Activated CD4-positive, alpha-beta T cell treated with anti-CD3 and anti-CD28 coated beads for 36 hours (primary cell): ENCODE measurements at regions of chr4 and their contacts with region 1.

Region 1: GRCh38 chr4:149264093-149264733 is 551.4 kb downstream of the IQCM start:
- DNase-seq: peak; percentile 24
- ATAC-seq: no peak
- H3K4me3 Mint-ChIP-seq: no peak overlapping the region
- H3K27ac Mint-ChIP-seq: no peak overlapping the region
- H3K4me1 Mint-ChIP-seq: no peaks in the 10 kb centered on the region
- H3K27me3 Mint-ChIP-seq: no peaks in the 10 kb centered on the region

Region 2: DNA sequence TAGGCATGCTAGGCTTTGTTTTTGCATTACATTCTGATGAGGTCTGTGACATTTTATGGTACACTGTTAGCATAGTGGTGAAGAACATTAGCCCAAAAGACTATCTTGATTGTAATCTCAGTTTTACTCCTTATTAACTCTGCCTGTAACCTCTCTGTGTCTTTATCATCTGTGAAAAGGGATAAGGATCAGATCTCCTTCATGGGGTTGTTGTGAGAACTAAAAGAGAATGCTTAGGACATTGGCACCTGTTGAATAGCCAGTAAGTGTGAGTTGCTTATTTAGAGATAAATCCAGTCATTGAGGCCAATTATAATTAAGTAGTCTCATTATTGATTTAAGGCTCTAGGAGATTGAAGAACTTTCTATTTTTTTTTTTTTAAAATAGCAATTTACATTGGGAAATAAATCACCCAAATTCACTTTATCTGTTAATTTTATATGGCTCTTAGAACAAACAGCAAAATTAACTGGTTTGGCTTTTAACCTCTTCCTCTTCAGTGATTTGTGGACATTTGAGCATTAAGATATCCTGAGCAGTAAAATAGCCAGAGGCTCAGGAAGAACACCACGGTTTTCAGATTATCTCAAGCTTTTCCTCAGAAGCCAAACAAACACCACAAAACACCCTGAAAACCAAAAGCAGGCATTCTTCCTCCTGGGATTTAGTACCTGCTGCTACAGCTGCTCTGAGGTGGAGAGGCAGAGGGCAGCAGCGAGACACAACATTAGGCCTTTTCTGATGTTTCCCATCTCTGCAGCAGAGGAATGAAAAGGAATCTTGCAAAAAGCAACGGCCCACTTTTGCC is 1339.4 kb before region 1 on chr4:
- CTCF ChIA-PET with region 1: no interaction called
- POLR2A ChIA-PET with region 1: no interaction called
- intact Hi-C with region 1: loop called in 1 of 2 experiments (anchors 5 kb)
- DNase-seq: peak; percentile 26
- ATAC-seq: no peak
- H3K4me3 Mint-ChIP-seq: no peak overlapping the region
- H3K27ac Mint-ChIP-seq: no peak overlapping the region
- H3K4me1 Mint-ChIP-seq: no peaks in the 10 kb centered on the region
- H3K27me3 Mint-ChIP-seq: no peaks in the 10 kb centered on the region

Region 3: GRCh38 chr4:147984065-147984777 is 1280.0 kb before region 1 on chr4:
- CTCF ChIA-PET with region 1: no interaction called
- POLR2A ChIA-PET with region 1: no interaction called
- intact Hi-C with region 1: loop called in 1 of 2 experiments (anchors 10 kb)
- DNase-seq: peak; percentile 29
- ATAC-seq: peak; percentile 69
- H3K4me3 Mint-ChIP-seq: no peak overlapping the region
- H3K27ac Mint-ChIP-seq: no peak overlapping the region
- H3K4me1 Mint-ChIP-seq: peaks cover 10% of the 10 kb centered on the region
- H3K27me3 Mint-ChIP-seq: no peaks in the 10 kb centered on the region

Region 4: DNA sequence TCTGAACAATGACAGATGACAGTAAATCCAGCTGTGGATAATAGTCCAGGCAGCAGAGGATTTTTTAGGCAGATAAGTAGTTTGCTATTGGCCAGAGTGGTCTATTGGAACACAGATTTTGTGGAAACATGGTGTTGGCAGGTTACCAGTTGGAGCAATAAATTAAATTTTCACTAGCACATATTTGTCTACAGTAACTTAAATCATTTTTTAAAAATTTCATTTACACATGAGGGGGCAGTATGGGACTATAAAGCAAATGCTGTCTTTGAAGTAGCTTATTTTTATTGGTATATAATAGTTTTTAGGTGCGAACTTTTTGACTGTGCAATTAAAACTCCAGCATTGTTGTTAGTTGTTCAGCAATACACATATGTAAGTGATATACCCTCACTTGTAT is 1242.5 kb before region 1 on chr4:
- CTCF ChIA-PET with region 1: no interaction called
- POLR2A ChIA-PET with region 1: no interaction called
- intact Hi-C with region 1: loop called in 1 of 2 experiments (anchors 5 kb)
- DNase-seq: no peak
- ATAC-seq: no peak
- H3K4me3 Mint-ChIP-seq: no peak overlapping the region
- H3K27ac Mint-ChIP-seq: no peak overlapping the region
- H3K4me1 Mint-ChIP-seq: no peaks in the 10 kb centered on the region
- H3K27me3 Mint-ChIP-seq: no peaks in the 10 kb centered on the region

Region 5: DNA sequence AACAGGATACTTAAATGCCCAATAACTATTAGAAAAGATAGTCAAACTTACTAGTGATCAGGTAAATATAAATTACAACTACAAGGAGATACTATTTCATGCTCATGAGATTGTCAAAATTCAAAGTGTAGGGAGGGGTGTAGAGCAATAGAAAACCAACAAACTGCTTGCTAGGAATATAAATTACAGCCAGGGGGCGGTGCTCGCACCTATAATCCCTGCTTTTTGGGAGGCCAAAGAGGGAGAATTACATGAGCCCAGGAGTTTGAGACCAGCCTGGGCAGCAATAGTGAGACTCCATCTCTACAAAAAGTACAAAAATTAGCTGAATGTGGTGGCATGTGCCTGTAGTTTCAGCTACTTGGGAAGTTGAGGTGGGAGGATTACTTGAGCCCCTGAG is 265.5 kb before region 1 on chr4:
- CTCF ChIA-PET with region 1: no interaction called
- POLR2A ChIA-PET with region 1: no interaction called
- intact Hi-C with region 1: loop called in 1 of 2 experiments (anchors 2 kb)
- DNase-seq: peak; percentile 22
- ATAC-seq: no peak
- H3K4me3 Mint-ChIP-seq: no peak overlapping the region
- H3K27ac Mint-ChIP-seq: no peak overlapping the region
- H3K4me1 Mint-ChIP-seq: no peaks in the 10 kb centered on the region
- H3K27me3 Mint-ChIP-seq: peaks cover 5% of the 10 kb centered on the region